ENCODE measurements at regions of chrX and their contacts with region 1.

Region 1: GRCh38 chrX:16882702-16883486 is 12.7 kb upstream of the RBBP7 start:
- DNase-seq: peak; percentile 59 to 77
- ATAC-seq: peak; percentile 78 to 84 (median 81)
- H3K4me3 ChIP-seq: peak overlapping the region; percentile 62
- H3K27ac ChIP-seq: peak overlapping the region; percentile 76
- H3K4me1 ChIP-seq: no peaks in the 10 kb centered on the region
- H3K27me3 ChIP-seq: peaks cover 0 to 50% (median 0%) of the 10 kb centered on the region in 3 donors
- CTCF ChIP-seq: peak; percentile 61

Region 2: DNA sequence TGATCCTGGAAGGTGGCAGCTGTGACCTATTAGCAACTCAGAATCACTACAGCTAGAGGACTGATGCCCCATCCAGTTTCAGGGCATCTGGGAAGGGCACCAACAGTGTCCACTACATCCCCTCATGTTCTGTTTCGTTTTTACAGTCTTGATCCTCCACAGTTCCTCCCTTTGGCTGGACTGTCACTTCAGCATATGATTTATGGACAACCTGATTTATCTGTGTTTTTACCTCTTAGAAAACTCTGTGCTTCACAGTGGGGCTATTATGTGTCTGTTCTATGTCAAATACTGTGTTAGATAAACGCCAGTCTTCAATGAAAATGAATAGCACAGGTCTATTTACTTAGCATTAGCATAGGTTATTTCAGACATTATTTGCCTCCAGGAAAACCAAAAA is 822.6 kb before region 1 on chrX:
- intact Hi-C with region 1: no loop called
- DNase-seq: no peak
- ATAC-seq: no peak
- H3K4me3 ChIP-seq: no peak overlapping the region
- H3K27ac ChIP-seq: no peak overlapping the region
- H3K4me1 ChIP-seq: no peaks in the 10 kb centered on the region
- H3K27me3 ChIP-seq: no peaks in the 10 kb centered on the region
- CTCF ChIP-seq: no peak

Region 3: GRCh38 chrX:16654093-16654492 is 228.8 kb before region 1 on chrX:
- intact Hi-C with region 1: no loop called
- DNase-seq: no peak
- ATAC-seq: no peak
- H3K4me3 ChIP-seq: no peak overlapping the region
- H3K27ac ChIP-seq: no peak overlapping the region
- H3K4me1 ChIP-seq: no peaks in the 10 kb centered on the region
- H3K27me3 ChIP-seq: peaks cover 0 to 5% (median 0%) of the 10 kb centered on the region in 3 donors
- CTCF ChIP-seq: no peak

Region 4: DNA sequence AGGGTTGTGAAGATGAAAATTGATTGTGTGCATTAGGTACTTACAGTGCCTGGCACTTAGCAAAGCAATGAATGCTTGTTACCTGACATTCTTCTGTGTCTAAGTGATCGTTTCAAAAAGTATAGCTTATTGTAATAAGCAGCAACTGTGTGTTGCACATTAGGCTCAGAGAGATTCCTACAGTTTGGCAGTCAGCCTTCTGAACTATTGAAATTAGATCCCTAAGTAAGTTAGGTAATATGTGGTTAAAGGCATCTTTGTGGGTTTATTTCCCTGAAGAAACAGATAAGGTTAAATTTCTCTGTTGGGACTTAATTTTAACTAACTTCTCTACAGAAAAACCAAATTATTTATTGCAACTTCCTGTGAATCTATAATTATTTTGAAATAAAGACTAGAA is 156.9 kb after region 1 on chrX:
- intact Hi-C with region 1: loop called (anchors 5 to 10 kb)
- DNase-seq: no peak
- ATAC-seq: no peak
- H3K4me3 ChIP-seq: no peak overlapping the region
- H3K27ac ChIP-seq: no peak overlapping the region
- H3K4me1 ChIP-seq: no peaks in the 10 kb centered on the region
- H3K27me3 ChIP-seq: peaks cover 0 to 5% (median 0%) of the 10 kb centered on the region in 3 donors
- CTCF ChIP-seq: no peak

Region 5: DNA sequence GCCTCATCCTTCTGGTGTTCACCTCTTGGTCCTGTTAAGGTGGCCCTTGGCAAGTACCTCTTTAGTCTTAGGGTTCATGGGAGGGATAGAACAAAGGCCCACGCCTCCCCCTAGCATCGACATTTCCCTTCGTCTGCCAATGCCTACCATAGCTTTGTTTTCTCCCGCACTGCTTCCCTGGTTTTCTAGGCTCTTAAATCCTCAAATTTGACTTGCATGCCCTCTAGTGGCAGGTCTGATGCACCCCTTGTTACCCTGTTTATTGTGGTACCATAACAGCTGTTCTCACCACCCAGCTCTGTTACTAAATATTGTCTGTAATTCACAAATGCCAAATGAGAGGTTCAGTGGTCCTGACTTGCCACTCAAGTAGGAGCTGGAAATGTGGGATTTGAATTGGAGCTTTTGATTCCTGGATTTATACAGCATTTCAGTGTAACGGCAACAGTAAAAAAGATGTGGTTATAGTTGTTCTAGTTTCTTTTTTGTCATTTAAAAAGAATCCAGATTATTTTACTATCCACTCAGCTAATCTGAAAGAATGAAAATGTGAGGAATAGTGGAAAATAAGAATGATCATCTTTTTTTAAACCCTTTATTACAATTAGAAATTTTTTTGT is 163.7 kb after region 1 on chrX:
- intact Hi-C with region 1: loop called (anchors 5 to 10 kb)
- DNase-seq: peak in 1 of 2 donors; percentile 22
- ATAC-seq: peak; percentile 75 to 93 (median 83)
- H3K4me3 ChIP-seq: no peak overlapping the region
- H3K27ac ChIP-seq: no peak overlapping the region
- H3K4me1 ChIP-seq: no peaks in the 10 kb centered on the region
- H3K27me3 ChIP-seq: no peaks in the 10 kb centered on the region
- CTCF ChIP-seq: peak; percentile 73

Measured in psoas muscle (tissue), 8 donors.